Right cardiac atrium (tissue), 5 donors: ENCODE measurements at regions of chr3 and their contacts with region 1.

Region 1: DNA sequence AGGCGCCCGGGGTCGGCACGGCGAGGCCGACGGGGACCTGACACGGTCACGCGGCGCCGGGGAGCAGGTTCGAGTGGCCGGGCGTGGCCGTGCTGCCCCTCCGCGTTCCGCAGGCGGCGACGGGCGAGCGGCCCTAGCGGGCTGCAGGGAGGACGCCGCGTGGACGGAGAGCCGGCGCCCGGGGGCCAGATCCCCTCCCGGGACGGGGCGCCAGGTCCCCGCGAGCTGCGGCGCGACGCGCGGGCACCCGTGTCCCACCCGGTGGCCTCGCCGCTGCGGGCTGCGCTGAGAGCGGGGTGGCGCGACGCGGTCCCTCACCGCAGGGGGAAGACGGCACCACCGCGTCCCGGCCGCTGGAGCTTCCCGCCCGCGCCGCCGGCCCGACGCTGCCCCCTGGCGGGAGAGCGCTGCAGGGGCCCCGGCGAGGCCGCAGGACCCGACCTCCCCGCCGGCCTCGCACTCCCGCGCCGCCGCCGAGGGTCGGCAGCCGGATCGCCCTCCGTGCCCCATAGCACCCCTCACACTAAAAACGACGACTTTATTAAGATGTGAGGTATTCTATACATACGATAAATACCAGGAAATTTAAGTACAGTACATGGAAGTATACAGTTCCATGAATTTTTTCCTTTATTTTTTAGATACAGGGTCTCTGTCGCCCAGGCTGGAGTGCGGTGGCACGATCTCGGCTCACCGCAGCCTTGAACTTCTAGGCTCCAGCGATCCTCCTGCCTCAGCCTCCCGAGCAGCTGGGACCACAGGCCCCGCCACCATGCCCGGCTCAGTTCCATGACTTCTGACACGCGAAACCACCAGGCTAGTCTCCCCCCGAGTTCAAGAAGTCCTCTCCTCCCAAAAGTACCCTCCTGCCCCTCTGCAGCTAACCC is 1.3 kb upstream of the PIGZ start:
- DNase-seq: peak; percentile 66 to 87 (median 87)
- ATAC-seq: peak; percentile 80 to 82
- H3K4me3 ChIP-seq: peak overlapping the region; percentile 78
- H3K27ac ChIP-seq: no peak overlapping the region
- H3K4me1 ChIP-seq: no peaks in the 10 kb centered on the region
- H3K27me3 ChIP-seq: no peaks in the 10 kb centered on the region

Region 2: DNA sequence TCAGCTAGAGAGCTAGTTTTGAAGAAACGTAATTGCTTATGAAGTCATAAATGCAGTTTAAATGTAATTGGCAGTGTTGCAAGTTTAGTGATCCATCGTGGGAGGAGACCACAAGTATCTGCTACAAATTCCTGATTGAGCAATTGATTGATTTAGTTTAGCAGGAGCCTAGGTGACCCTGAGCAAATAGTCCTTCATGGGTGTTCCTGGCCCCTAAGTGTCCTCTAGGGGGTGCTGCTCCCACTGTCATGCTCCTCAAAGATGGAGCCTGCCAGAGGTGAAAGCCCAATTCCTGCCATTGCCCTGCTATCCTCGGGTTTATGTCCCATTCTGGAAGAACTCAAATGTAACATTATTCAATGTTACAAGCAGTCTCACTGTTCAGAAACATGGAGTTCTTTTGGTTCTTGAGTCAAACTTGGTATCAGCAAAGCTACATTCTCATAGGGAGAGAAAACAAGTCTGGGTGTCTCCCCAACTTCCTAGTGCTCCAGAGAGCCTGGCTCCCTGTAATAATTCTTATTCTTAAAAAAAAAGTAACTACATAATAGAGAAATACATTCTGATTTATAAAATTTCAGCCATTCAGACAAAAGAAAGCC is 132.0 kb before region 1 on chr3:
- intact Hi-C with region 1: loop called in 2 of 4 experiments (anchors 5 kb)
- DNase-seq: peak; percentile 53 to 72 (median 69)
- ATAC-seq: peak; percentile 65 to 84
- H3K4me3 ChIP-seq: no peak overlapping the region
- H3K27ac ChIP-seq: no peak overlapping the region
- H3K4me1 ChIP-seq: no peaks in the 10 kb centered on the region
- H3K27me3 ChIP-seq: no peaks in the 10 kb centered on the region

Region 3: GRCh38 chr3:197029511-197030167 is 59.7 kb after region 1 on chr3 and contains the start of gene MELTF:
- intact Hi-C with region 1: no loop called
- DNase-seq: peak; percentile 72 to 85 (median 85)
- ATAC-seq: peak; percentile 65
- H3K4me3 ChIP-seq: peak within 1 kb of the TSS; percentile 43
- H3K27ac ChIP-seq: peak within 1 kb of the TSS; percentile 12
- H3K4me1 ChIP-seq: peaks cover 5% of the 10 kb centered on the region
- H3K27me3 ChIP-seq: no peaks in the 10 kb centered on the region
- total RNA-seq, gene MELTF: 1.2 to 6.5 (median 2.9) TPM